ENCODE measurements at regions of chr15 and their contacts with region 1.

Region 1: DNA sequence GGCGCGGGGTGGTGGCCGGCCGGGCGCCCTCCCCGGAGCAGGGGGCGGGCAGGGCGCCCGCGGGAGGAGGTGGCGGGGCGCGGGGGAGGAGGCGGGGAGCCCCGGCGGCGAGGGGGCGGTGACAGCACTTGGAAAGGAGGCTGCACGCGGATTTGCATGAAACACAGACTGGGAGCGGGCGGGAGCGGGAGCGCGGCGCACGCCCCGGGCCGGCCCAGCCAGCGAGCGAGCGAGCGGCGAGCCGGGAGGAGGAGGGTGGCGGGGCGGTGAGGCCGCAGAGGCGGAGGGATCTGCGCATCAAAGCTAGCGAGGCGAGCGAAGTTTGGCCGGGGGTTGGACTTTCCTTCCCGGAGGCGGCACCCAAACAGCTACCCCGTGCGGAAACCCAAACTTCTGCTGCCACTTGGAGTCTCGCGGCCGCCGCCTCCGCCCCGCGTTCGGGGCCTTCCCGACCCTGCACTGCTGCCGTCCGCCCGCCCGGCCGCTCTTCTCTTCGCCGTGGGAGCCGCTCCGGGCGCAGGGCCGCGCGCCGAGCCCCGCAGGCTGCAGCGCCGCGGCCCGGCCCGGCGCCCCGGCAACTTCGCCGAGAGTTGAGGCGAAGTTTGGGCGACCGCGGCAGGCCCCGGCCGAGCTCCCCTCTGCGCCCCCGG is at the start of gene SMAD3:
- DNase-seq: peak; percentile 86 to 92 (median 89)
- H3K4me3 ChIP-seq: peak within 1 kb of the TSS; percentile 71 to 100 (median 79)
- H3K4me3 Mint-ChIP-seq: peak within 1 kb of the TSS; percentile 99 to 100
- H3K27ac ChIP-seq: peak within 1 kb of the TSS; percentile 83 to 96
- H3K27ac Mint-ChIP-seq: peak within 1 kb of the TSS; percentile 94 to 99 (median 98)
- H3K4me1 ChIP-seq: peaks cover 36 to 46% of the 10 kb centered on the region in 2 donors
- H3K4me1 Mint-ChIP-seq: peaks cover 46% of the 10 kb centered on the region
- H3K27me3 ChIP-seq: no peaks in the 10 kb centered on the region
- H3K27me3 Mint-ChIP-seq: peaks cover 2 to 7% (median 6%) of the 10 kb centered on the region in 3 donors
- CTCF ChIP-seq: no peak
- polyA plus RNA-seq, gene SMAD3: 4.4 to 41.7 (median 5.4) TPM

Region 2: DNA sequence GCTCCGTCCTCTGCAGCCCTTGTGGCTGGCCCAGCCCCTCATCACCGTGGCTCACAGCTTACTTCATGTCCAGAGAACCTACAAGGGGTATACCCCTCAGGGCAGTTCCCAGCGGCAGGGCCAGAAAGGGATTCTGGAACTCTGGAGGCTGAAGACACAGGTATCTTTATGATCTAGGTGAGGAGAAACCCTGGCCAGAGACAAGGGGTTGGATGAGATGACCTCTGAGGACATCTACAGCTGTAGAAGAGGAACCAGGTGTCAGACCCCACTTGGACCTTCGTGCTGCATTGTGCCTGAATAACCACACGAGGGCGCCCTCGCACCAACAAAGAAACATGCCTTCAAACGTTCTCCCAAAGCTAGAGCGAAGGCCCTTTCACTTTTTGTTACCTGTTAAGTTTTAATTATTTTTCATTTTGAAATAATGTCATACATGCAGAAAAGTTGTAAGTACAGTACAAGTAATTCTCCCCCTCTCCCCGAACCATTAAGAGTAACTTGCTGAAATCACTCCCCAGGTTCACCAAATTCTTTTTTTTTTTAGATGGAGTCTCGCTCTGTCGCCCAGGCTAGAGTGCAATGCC is 118.9 kb before region 1 on chr15:
- intact Hi-C with region 1: loop called (anchors 5 kb)
- DNase-seq: peak; percentile 76 to 81 (median 80)
- H3K4me3 ChIP-seq: no peak overlapping the region
- H3K4me3 Mint-ChIP-seq: no peak overlapping the region
- H3K27ac ChIP-seq: no peak overlapping the region
- H3K27ac Mint-ChIP-seq: no peak overlapping the region
- H3K4me1 ChIP-seq: peaks cover 16 to 17% of the 10 kb centered on the region in 2 donors
- H3K4me1 Mint-ChIP-seq: peaks cover 34% of the 10 kb centered on the region
- H3K27me3 ChIP-seq: no peaks in the 10 kb centered on the region
- H3K27me3 Mint-ChIP-seq: peaks cover 0 to 5% (median 2%) of the 10 kb centered on the region in 3 donors
- CTCF ChIP-seq: peak; percentile 91

Region 3: GRCh38 chr15:67003586-67003985 is 62.0 kb before region 1 on chr15:
- intact Hi-C with region 1: loop called in 1 of 2 experiments (anchors 5 kb)
- DNase-seq: no peak
- H3K4me3 ChIP-seq: no peak overlapping the region
- H3K4me3 Mint-ChIP-seq: no peak overlapping the region
- H3K27ac ChIP-seq: no peak overlapping the region
- H3K27ac Mint-ChIP-seq: peak overlapping the region in 2 of 7 donors; percentile 3 to 23
- H3K4me1 ChIP-seq: peaks cover 26 to 36% of the 10 kb centered on the region in 2 donors
- H3K4me1 Mint-ChIP-seq: peaks cover 36% of the 10 kb centered on the region
- H3K27me3 ChIP-seq: no peaks in the 10 kb centered on the region
- H3K27me3 Mint-ChIP-seq: peaks cover 0 to 3% (median 2%) of the 10 kb centered on the region in 3 donors
- CTCF ChIP-seq: no peak

Region 4: DNA sequence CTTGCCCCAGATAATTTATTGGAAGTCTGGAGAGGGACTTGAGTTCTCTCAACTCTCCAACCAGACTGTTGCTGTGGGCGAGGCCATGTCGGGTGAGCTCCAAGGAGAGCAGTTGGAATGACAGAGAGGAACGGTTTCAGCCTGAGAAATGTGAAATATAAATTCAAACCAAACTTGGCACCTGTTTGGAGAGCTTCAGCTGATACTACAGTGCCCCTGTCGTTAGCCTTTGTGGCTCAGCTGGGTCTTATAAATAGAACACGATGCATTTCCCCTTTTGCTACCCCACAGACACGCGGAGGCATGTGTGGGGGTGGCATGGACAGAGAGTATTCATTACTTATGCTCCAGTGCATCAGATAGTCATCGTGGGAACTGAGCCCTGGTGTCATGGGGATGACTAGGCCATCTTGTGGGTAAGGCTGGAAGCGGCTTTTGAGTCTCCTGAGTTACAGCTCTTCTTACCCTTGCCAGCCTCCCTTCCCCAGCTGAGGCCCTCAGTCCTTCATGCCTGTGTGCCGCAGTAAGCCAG is 15.4 kb after region 1 on chr15:
- intact Hi-C with region 1: loop called in 1 of 2 experiments (anchors 2 kb)
- DNase-seq: peak; percentile 95 to 97 (median 96)
- H3K4me3 ChIP-seq: peak overlapping the region in 1 of 3 experiments; percentile 45
- H3K4me3 Mint-ChIP-seq: peak overlapping the region; percentile 56 to 58
- H3K27ac ChIP-seq: peak overlapping the region; percentile 75 to 83
- H3K27ac Mint-ChIP-seq: peak overlapping the region; percentile 88 to 96 (median 95)
- H3K4me1 ChIP-seq: peaks cover 91 to 98% of the 10 kb centered on the region in 2 donors
- H3K4me1 Mint-ChIP-seq: peaks cover 97% of the 10 kb centered on the region
- H3K27me3 ChIP-seq: no peaks in the 10 kb centered on the region
- H3K27me3 Mint-ChIP-seq: peaks cover 0 to under 1% (median 0%) of the 10 kb centered on the region in 3 donors
- CTCF ChIP-seq: peak; percentile 45

Region 5: GRCh38 chr15:67254238-67255175 is 188.9 kb after region 1 on chr15 and contains the starts of genes AAGAB and IQCH:
- intact Hi-C with region 1: loop called (anchors 10 kb)
- DNase-seq: peak; percentile 97 to 99 (median 98)
- H3K4me3 ChIP-seq: peak within 1 kb of the TSS; percentile 89 to 95 (median 91)
- H3K4me3 Mint-ChIP-seq: peak within 1 kb of the TSS; percentile 99
- H3K27ac ChIP-seq: peak within 1 kb of the TSS; percentile 74 to 97
- H3K27ac Mint-ChIP-seq: peak within 1 kb of the TSS; percentile 94 to 98 (median 96)
- H3K4me1 ChIP-seq: peaks cover 21 to 28% of the 10 kb centered on the region in 2 donors
- H3K4me1 Mint-ChIP-seq: peaks cover 36% of the 10 kb centered on the region
- H3K27me3 ChIP-seq: peaks cover 6% of the 10 kb centered on the region in 2 donors
- H3K27me3 Mint-ChIP-seq: peaks cover 4 to 11% (median 11%) of the 10 kb centered on the region in 3 donors
- CTCF ChIP-seq: no peak
- polyA plus RNA-seq, gene AAGAB: 11.2 to 40.4 (median 30.1) TPM
- polyA plus RNA-seq, gene IQCH: 0.03 TPM in 1 of 3 donors, not detected in the others